Left cardiac atrium (tissue), 4 donors: ENCODE measurements at regions of chr11 and their contacts with region 1.

Region 1: DNA sequence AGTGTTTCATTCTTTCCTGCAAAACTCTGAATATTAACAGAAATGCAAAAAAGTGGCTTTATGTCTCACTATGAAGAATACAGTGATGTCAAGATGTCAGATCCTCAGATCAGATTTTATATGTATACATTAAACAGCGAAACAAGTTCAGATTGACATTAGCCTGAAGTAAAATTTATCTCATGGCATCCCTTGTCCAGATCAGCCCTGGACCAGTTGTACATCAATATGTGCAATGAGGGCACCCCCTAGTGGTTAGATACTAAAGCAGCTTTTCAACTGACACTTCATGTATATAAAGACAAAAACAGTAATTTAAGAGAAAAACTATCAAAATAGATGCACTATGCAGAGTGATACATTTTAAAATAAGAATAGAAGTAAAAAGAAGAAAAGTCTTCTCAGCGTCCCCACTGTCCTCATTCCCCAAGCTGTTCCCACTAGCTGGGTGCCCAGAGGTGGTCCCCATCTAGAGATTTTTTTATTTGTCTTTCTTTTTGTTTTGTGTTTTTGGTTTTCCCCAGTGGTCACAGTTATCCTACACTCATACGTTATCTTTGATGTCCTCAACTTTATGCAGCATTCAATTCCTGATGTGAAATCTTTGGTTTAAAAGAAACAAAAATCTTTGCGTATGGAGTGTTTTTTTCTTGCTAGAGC is 2193.4 kb upstream of the RAG2 start:
- DNase-seq: no peak
- ATAC-seq: peak; percentile 46 to 71

Region 2: DNA sequence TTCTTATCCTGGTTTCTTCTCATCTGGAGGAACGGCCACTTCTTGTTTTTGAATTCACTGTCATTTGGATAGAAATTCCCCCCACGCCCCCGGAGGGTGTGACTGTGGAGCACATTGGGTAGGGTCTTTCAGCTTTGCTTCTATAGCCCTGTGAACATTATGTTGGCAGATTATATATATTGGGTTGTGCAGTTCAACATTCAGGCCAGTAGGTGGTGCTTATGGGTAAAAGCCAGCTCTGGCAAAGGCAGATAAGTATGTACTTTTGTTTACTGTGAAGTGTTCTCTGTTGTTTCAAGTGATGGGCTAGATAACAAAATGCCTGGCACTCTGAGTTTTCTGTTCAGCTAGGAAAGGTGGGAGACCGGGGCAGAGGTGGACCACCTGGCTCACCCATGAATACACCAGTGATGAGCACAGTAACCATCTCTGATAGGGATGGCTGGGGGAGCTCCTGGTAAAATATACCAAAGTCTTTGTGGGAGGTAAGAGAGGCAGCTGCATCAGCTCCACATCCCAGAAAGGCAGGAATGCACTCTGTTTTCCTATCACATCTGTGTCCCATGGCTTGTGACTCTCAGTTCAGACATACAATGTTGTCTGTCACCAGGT is 845.2 kb before region 1 on chr11:
- intact Hi-C with region 1: loop called (anchors 10 kb)
- DNase-seq: no peak
- ATAC-seq: no peak

Region 3: DNA sequence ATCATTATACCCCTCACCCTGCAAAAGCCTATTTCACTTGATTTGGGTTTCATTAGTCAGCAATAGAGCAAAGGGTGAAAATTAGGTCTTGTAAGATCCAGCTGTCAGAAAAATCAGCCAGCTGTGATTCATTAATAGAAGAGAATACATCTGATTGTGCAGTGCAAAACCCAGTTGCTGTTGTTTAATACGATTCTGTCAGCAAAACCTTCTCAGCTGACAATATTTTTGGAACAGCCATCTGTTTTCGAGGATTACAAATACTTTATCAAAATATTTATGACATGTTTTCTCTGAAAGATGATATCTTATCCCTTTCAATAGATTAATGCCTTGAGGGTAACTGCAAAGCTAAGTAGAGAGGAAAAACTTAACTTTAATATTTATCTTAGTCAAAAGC is 839.4 kb before region 1 on chr11:
- intact Hi-C with region 1: loop called (anchors 10 kb)
- DNase-seq: no peak
- ATAC-seq: no peak